Endothelial cell of umbilical vein (primary cell): ENCODE measurements at regions of chr11 and their contacts with region 1.

Region 1: GRCh38 chr11:62556108-62556871 is 9.7 kb upstream of the AHNAK start:
- DNase-seq: peak; percentile 94
- H3K4me3 ChIP-seq: peak overlapping the region in 1 of 3 experiments; percentile 6
- H3K27ac ChIP-seq: peak overlapping the region; percentile 56
- H3K4me1 ChIP-seq: peaks cover 75% of the 10 kb centered on the region
- H3K27me3 ChIP-seq: no peaks in the 10 kb centered on the region
- CTCF ChIP-seq: no peak
- POLR2A ChIP-seq: peak; percentile 80

Region 2: GRCh38 chr11:62370743-62371440 is 185.4 kb before region 1 on chr11:
- CTCF ChIA-PET with region 1: no interaction called
- POLR2A ChIA-PET with region 1: no interaction called
- dilution Hi-C with region 1: no loop called
- intact Hi-C with region 1: no loop called
- DNase-seq: no peak
- H3K4me3 ChIP-seq: no peak overlapping the region
- H3K27ac ChIP-seq: no peak overlapping the region
- H3K4me1 ChIP-seq: no peaks in the 10 kb centered on the region
- H3K27me3 ChIP-seq: no peaks in the 10 kb centered on the region
- CTCF ChIP-seq: no peak
- POLR2A ChIP-seq: no peak

Region 3: DNA sequence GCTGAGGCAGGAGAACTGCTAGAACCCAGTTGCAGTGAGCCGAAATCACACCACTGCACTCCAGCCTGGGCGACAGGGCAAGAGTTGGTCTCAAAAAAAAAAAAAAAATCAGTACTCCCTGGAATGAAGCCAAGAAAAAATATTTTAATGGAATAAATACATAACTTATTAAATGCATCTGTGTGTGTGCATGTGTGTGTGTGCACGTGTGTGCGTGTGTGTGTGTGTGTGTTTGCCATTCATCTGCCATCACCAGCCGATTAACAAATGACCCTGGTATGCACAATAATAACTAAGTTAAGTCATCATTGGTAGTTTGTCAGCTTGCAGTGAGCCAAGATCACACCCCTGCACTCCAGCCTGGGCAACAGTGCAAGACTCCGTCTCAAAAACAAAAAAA is 172.5 kb before region 1 on chr11:
- CTCF ChIA-PET with region 1: interaction called, 3 read pairs
- POLR2A ChIA-PET with region 1: no interaction called
- dilution Hi-C with region 1: no loop called
- intact Hi-C with region 1: loop called (anchors 1 kb)
- DNase-seq: no peak
- H3K4me3 ChIP-seq: no peak overlapping the region
- H3K27ac ChIP-seq: no peak overlapping the region
- H3K4me1 ChIP-seq: no peaks in the 10 kb centered on the region
- H3K27me3 ChIP-seq: no peaks in the 10 kb centered on the region
- CTCF ChIP-seq: no peak
- POLR2A ChIP-seq: no peak

Region 4: DNA sequence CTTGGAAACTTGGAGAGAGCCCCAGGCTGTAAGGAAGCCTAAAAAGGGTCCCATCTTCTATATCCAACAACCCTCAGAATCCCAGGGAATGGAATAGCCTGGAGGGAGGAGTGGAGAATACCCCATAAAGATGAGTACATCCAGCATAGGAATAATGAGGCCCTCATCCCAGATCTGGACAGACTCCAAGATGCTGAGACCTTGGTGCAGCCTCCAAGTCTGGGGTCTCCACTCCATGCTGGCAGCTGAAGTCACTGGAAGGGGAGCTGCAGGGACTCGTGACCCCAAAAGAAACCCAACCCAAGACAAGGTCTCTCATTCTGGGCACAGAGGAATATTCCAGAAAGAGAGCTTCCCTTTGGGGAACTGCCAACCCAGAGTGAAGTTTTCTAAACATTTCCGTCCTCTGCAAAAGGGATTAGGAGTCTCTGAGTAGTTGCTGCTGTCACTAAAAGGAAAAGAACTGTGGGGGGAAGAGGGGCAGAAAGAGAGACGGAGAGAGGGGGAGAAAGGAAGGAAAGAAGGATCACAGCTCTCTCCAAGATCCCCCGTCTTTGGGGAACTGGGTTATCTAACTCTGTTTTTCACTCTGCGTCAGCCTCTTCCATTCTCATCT is 136.9 kb before region 1 on chr11:
- CTCF ChIA-PET with region 1: interaction called, 162 read pairs
- POLR2A ChIA-PET with region 1: interaction called, 5 read pairs
- dilution Hi-C with region 1: no loop called
- intact Hi-C with region 1: loop called (anchors 1 kb)
- DNase-seq: no peak
- H3K4me3 ChIP-seq: no peak overlapping the region
- H3K27ac ChIP-seq: no peak overlapping the region
- H3K4me1 ChIP-seq: no peaks in the 10 kb centered on the region
- H3K27me3 ChIP-seq: peaks cover 3 to 6% of the 10 kb centered on the region in 2 experiments
- CTCF ChIP-seq: no peak
- POLR2A ChIP-seq: no peak

Region 5: GRCh38 chr11:62497132-62497915 is 59.0 kb before region 1 on chr11:
- CTCF ChIA-PET with region 1: interaction called, 9 read pairs
- POLR2A ChIA-PET with region 1: no interaction called
- dilution Hi-C with region 1: no loop called
- intact Hi-C with region 1: loop called (anchors 1 kb)
- DNase-seq: peak; percentile 68
- H3K4me3 ChIP-seq: no peak overlapping the region
- H3K27ac ChIP-seq: peak overlapping the region; percentile 58
- H3K4me1 ChIP-seq: peaks cover 25% of the 10 kb centered on the region
- H3K27me3 ChIP-seq: no peaks in the 10 kb centered on the region
- CTCF ChIP-seq: peak; percentile 27 to 33
- POLR2A ChIP-seq: no peak

Region 6: GRCh38 chr11:62573592-62574362 is 17.5 kb after region 1 on chr11 and contains the start of gene EEF1G:
- CTCF ChIA-PET with region 1: interaction called, 9 read pairs
- POLR2A ChIA-PET with region 1: interaction called, 13 read pairs
- dilution Hi-C with region 1: no loop called
- intact Hi-C with region 1: no loop called
- DNase-seq: peak; percentile 100
- H3K4me3 ChIP-seq: peak within 1 kb of the TSS; percentile 51 to 85 (median 70)
- H3K27ac ChIP-seq: peak within 1 kb of the TSS; percentile 99
- H3K4me1 ChIP-seq: peaks cover 59% of the 10 kb centered on the region
- H3K27me3 ChIP-seq: no peaks in the 10 kb centered on the region
- CTCF ChIP-seq: no peak
- POLR2A ChIP-seq: peak; percentile 96
- total RNA-seq, gene EEF1G: 1,341 and 1,345 TPM in 2 replicates